Gastrocnemius medialis (tissue), 4 donors: ENCODE measurements at regions of chr10 and their contacts with region 1.

Region 1: GRCh38 chr10:127906548-127907377 is at the start of gene PTPRE:
- DNase-seq: no peak
- ATAC-seq: peak; percentile 84 to 86
- H3K4me3 ChIP-seq: peak within 1 kb of the TSS; percentile 53 to 72 (median 60)
- H3K27ac ChIP-seq: peak within 1 kb of the TSS; percentile 46 to 68 (median 62)
- H3K4me1 ChIP-seq: peaks cover 6 to 7% of the 10 kb centered on the region in 2 donors
- H3K27me3 ChIP-seq: peaks cover 4 to 8% (median 6%) of the 10 kb centered on the region in 3 donors
- CTCF ChIP-seq: peak; percentile 61 to 98 (median 93)
- POLR2A ChIP-seq: peak in 1 of 2 donors; percentile 32
- total RNA-seq, gene PTPRE: 0.97 to 2.2 (median 1.6) TPM

Region 2: GRCh38 chr10:127832501-127832900 is 74.3 kb before region 1 on chr10:
- in situ Hi-C with region 1: no loop called
- intact Hi-C with region 1: no loop called
- DNase-seq: no peak
- ATAC-seq: no peak
- H3K4me3 ChIP-seq: no peak overlapping the region
- H3K27ac ChIP-seq: no peak overlapping the region
- H3K4me1 ChIP-seq: no peaks in the 10 kb centered on the region
- H3K27me3 ChIP-seq: no peaks in the 10 kb centered on the region
- CTCF ChIP-seq: no peak
- POLR2A ChIP-seq: no peak

Region 3: DNA sequence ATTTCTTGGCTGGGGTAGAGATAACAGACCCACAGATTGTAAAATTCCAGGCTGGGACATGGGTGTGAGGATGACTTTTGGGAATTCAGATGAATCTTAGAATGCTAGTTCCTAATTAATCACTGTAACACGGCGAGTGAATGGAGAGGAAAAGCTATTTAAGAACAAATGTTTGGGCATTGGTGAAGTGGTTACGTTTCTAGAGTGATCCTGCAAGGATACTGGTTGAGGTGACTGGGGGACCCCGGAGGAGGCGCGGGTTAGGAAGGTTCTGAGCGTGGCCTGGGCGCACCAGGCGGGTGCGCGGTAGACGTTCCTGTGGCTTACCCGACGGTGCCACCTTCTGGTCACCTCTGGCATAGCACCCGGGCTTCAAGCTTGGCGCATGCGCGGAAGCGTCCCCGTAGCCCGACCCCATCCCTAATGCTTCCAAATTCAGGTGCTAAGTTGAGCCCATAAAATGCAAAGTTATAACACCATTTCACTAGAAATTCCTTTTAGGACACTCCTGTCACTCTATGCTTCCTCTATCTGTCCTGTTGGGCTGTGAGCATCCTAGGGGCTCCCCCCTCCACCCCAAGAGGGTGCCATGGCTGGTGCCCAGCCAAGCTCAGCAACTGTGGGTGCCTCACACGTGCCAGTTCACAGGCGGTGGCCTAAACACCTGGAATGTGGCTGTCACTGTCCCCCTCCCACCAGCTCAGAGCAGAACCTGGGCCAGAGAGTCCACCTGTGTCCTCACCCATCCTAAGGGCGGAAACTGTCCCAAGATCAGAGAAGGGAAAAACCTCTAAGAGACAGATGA is 104.6 kb after region 1 on chr10:
- in situ Hi-C with region 1: loop called (anchors 5 to 10 kb)
- intact Hi-C with region 1: loop called (anchors 1 kb)
- DNase-seq: peak; percentile 47 to 62
- ATAC-seq: peak; percentile 85 to 90
- H3K4me3 ChIP-seq: no peak overlapping the region
- H3K27ac ChIP-seq: no peak overlapping the region
- H3K4me1 ChIP-seq: peaks cover 0 to 3% of the 10 kb centered on the region in 2 donors
- H3K27me3 ChIP-seq: no peaks in the 10 kb centered on the region
- CTCF ChIP-seq: peak; percentile 85 to 99 (median 95)
- POLR2A ChIP-seq: no peak